ENCODE measurements at regions of chr7 and their contacts with region 1.

Region 1: GRCh38 chr7:93006480-93007095 is 111.2 kb downstream of the SAMD9 start:
- DNase-seq: no peak
- ATAC-seq: no peak
- H3K4me3 ChIP-seq: no peak overlapping the region
- H3K27ac ChIP-seq: no peak overlapping the region
- H3K4me1 ChIP-seq: no peaks in the 10 kb centered on the region
- H3K27me3 ChIP-seq: no peaks in the 10 kb centered on the region

Region 2: GRCh38 chr7:92944633-92945032 is 62.0 kb before region 1 on chr7:
- intact Hi-C with region 1: loop called in 1 of 2 experiments (anchors 10 kb)
- DNase-seq: no peak
- ATAC-seq: peak; percentile 48
- H3K4me3 ChIP-seq: no peak overlapping the region
- H3K27ac ChIP-seq: no peak overlapping the region
- H3K4me1 ChIP-seq: no peaks in the 10 kb centered on the region
- H3K27me3 ChIP-seq: no peaks in the 10 kb centered on the region

Region 3: GRCh38 chr7:92973974-92974373 is 32.6 kb before region 1 on chr7:
- intact Hi-C with region 1: no loop called
- DNase-seq: no peak
- ATAC-seq: no peak
- H3K4me3 ChIP-seq: no peak overlapping the region
- H3K27ac ChIP-seq: no peak overlapping the region
- H3K4me1 ChIP-seq: no peaks in the 10 kb centered on the region
- H3K27me3 ChIP-seq: no peaks in the 10 kb centered on the region

Measured in aorta (tissue), 5 donors.